ENCODE measurements at regions of chr4 and their contacts with region 1.

Region 1: GRCh38 chr4:73258686-73259570 is at the start of gene ANKRD17:
- DNase-seq: peak; percentile 95
- H3K4me3 Mint-ChIP-seq: peak within 1 kb of the TSS; percentile 98
- H3K27ac Mint-ChIP-seq: peak within 1 kb of the TSS; percentile 98
- H3K4me1 Mint-ChIP-seq: peaks cover 45% of the 10 kb centered on the region
- H3K27me3 Mint-ChIP-seq: no peaks in the 10 kb centered on the region
- total RNA-seq, gene ANKRD17: 43.2 to 44.7 TPM

Region 2: DNA sequence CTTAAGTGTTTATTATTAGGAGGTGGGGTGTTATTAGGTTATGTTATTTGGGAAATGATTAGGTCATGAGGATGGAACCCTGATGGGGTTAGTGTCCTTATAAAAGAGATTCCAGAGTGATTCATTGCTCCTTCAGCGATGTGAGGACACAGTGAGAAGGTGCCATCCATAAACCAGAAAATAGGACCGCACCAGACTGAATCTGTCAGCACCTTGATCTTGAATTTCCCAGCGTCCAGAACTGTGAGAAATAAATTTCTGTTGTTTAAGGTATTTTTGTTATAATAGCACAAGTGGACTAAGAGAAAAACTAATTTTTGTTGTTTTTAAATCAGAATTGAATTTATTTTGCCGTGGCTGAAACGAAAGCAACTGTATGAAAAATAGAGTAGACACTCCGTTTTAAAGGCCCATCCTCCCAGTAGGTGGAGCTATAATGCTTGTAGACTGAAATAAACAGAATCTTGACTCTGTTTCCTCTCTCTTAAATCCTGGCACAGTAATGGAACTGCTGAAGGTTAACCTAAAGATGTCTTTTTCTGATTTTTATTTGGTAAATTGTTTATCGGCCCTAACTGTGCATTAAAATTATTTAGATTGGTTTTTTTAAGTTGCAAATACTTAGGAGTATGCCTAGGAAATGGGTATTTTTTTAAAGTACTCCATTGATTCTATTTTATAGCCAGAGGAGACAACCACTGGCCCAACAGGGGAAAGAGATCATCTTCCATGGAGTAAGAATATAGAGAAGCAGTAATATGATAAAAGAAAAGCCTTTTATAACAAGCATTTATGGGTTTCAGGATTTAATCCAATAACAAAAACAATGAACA is 556.7 kb before region 1 on chr4:
- CTCF ChIA-PET with region 1: interaction called, 3 read pairs
- POLR2A ChIA-PET with region 1: no interaction called
- intact Hi-C with region 1: loop called (anchors 1 kb)
- DNase-seq: no peak
- H3K4me3 Mint-ChIP-seq: peak overlapping the region; percentile 69
- H3K27ac Mint-ChIP-seq: no peak overlapping the region
- H3K4me1 Mint-ChIP-seq: no peaks in the 10 kb centered on the region
- H3K27me3 Mint-ChIP-seq: no peaks in the 10 kb centered on the region

Region 3: GRCh38 chr4:72977936-72978485 is 280.9 kb before region 1 on chr4:
- CTCF ChIA-PET with region 1: no interaction called
- POLR2A ChIA-PET with region 1: no interaction called
- intact Hi-C with region 1: no loop called
- DNase-seq: no peak
- H3K4me3 Mint-ChIP-seq: no peak overlapping the region
- H3K27ac Mint-ChIP-seq: no peak overlapping the region
- H3K4me1 Mint-ChIP-seq: peaks cover 3% of the 10 kb centered on the region
- H3K27me3 Mint-ChIP-seq: peaks cover 11% of the 10 kb centered on the region

Region 4: GRCh38 chr4:73036123-73036522 is 222.8 kb before region 1 on chr4:
- CTCF ChIA-PET with region 1: interaction called, 12 read pairs
- POLR2A ChIA-PET with region 1: no interaction called
- intact Hi-C with region 1: no loop called
- DNase-seq: no peak
- H3K4me3 Mint-ChIP-seq: no peak overlapping the region
- H3K27ac Mint-ChIP-seq: no peak overlapping the region
- H3K4me1 Mint-ChIP-seq: peaks cover 14% of the 10 kb centered on the region
- H3K27me3 Mint-ChIP-seq: peaks cover 4% of the 10 kb centered on the region

Region 5: DNA sequence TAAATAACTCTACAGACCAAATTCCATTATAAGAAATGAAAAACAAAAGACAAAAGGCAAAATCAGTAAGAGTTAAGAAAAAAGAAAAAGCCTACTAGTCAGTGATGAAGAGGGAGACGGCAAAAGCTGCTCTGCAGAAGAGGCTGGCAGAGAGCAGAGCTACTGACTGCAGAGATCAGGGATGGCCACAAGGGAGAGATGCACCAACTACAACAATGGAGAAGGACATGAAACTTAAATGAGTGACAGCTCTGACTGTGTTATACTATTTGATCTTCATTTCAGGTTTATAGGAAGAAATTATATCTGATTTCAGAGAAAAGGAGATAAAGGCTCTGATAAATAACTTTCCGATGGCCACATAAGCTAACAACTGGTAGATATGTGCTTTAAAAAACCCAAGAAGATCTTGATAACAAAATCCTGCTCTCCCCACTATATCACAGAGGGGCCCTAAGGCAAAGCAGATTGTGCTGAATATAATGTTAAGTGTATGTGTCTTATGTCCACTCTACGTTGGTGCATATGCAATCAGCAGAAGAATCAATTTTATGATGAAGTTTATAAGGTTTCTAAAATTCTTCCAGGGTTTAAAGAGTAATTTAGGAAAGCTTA is 131.0 kb before region 1 on chr4:
- CTCF ChIA-PET with region 1: interaction called, 22 read pairs
- POLR2A ChIA-PET with region 1: no interaction called
- intact Hi-C with region 1: loop called (anchors 5 kb)
- DNase-seq: no peak
- H3K4me3 Mint-ChIP-seq: no peak overlapping the region
- H3K27ac Mint-ChIP-seq: no peak overlapping the region
- H3K4me1 Mint-ChIP-seq: peaks cover 7% of the 10 kb centered on the region
- H3K27me3 Mint-ChIP-seq: no peaks in the 10 kb centered on the region

Region 6: DNA sequence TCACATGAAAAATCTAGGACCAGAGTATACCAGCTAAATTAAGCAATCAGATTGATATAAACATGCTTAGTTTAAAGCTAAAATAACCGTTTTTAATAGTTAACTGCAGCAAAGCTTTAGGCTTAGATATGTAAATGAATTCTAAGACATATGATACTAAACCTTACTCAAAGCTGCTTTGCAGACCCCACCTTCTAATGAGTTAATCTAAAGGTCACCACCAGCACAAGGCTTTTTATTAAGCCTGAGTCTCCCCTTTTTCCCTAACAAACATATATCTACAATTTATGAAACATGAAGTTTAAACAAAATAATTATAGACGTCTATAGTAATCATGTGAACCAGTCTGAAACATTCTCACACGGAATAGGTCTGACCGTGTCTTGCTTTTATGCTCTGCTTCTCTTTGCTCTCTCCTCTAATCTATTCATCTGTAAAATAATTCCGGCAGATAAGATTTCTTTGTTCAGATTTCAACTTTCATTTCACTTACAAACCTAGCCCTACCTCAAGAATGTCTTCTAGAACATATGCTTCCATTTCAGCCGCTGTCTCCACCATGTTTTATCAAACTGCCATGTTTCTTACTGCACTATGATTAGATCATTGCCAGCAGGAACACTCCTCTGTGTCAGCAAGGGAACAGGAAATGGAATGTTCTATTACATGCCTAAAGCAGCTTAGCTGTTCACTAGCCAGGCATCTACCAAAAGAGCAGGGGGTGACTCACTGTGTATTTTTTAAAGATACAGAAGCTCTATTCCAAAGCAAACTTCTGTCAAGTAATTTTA is 36.3 kb before region 1 on chr4:
- CTCF ChIA-PET with region 1: interaction called, 15 read pairs
- POLR2A ChIA-PET with region 1: interaction called, 6 read pairs
- intact Hi-C with region 1: loop called (anchors 1 kb)
- DNase-seq: peak; percentile 57
- H3K4me3 Mint-ChIP-seq: no peak overlapping the region
- H3K27ac Mint-ChIP-seq: no peak overlapping the region
- H3K4me1 Mint-ChIP-seq: peaks cover 30% of the 10 kb centered on the region
- H3K27me3 Mint-ChIP-seq: no peaks in the 10 kb centered on the region

Region 7: DNA sequence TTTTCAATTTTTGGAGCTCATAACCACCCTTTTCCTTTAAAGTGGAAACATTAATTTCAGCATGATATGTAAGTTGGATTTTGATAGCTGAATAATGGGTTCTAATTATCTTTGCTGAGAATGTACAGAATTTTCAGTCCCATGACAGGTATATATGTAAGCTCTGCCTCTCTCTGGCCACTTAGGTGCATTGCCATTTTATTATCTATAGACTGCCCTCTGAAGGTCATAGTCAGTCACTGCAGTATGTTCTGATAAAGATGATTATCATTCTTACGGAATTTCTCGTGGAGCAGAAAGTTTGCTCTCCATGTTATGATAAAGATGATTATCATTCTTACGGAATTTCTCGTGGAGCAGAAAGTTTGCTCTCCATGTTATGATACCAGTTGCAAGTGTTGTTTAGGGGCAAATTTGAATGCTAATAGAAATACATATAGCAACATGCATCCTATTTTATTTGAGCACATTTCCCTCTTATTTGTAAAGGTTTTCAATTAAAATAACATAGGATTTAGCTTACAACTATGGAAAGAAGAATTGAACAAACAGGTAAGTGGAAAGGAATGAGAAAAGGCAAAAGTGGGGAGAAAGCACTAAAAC is 187.5 kb after region 1 on chr4:
- CTCF ChIA-PET with region 1: interaction called, 12 read pairs
- POLR2A ChIA-PET with region 1: no interaction called
- intact Hi-C with region 1: loop called (anchors 5 kb)
- DNase-seq: no peak
- H3K4me3 Mint-ChIP-seq: no peak overlapping the region
- H3K27ac Mint-ChIP-seq: no peak overlapping the region
- H3K4me1 Mint-ChIP-seq: no peaks in the 10 kb centered on the region
- H3K27me3 Mint-ChIP-seq: peaks cover 15% of the 10 kb centered on the region

Region 8: DNA sequence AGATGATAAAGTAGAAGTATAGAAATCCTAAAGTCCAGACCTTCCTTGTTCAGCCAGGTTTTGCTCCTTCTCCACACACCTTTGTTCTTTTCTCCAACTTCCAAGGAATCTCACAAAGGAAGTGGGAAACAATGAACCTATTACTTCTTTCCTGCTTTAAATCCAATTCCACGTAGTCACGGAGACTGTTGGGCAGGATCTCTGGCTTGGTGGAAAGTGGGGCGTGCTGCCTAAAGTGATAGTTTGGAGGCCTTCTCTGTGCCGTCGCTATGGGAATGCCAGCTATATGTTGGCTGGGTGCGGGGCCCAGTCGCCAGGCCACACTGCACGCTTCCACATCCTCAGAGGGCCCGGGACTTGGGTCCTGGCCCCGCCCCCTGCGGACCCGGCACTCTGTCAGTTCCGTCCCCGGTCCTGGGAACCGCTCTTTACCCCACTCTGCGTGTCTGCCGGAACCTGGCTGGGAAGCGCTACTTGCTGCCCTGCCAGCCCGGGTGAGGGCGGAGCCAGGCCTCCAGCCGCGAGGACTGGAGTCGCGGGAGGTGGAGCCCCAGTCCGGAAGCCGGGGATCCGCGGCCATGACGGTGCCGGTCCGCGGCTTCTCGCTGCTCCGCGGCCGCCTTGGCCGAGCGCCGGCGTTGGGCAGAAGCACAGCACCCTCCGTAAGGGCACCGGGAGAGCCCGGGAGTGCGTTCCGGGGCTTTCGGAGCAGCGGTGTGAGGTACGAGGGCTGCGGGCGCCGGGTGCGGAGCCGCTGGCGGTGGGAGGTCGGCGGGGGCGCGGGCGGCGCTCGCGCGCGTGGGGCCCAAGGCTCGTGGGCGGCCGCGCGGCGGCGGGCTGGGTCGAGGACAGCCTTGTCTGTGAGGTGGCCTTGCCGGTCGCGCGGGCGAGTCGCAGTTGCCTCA is 898.9 kb after region 1 on chr4 and contains the start of gene MTHFD2L:
- CTCF ChIA-PET with region 1: no interaction called
- POLR2A ChIA-PET with region 1: no interaction called
- intact Hi-C with region 1: loop called (anchors 2 kb)
- DNase-seq: peak; percentile 87
- H3K4me3 Mint-ChIP-seq: peak within 1 kb of the TSS; percentile 88
- H3K27ac Mint-ChIP-seq: peak within 1 kb of the TSS; percentile 74
- H3K4me1 Mint-ChIP-seq: peaks cover 17% of the 10 kb centered on the region
- H3K27me3 Mint-ChIP-seq: peaks cover 2% of the 10 kb centered on the region
- total RNA-seq, gene MTHFD2L: 5.4 to 6.5 TPM

Measured in activated CD4-positive, alpha-beta memory T cell treated with anti-CD3 and anti-CD28 coated beads for 36 hours (primary cell).